ENCODE measurements at regions of chr9 and their contacts with region 1.

Region 1: GRCh38 chr9:93962561-93963440 is 7.6 kb upstream of the BARX1 start:
- DNase-seq: peak; percentile 78 to 82
- ATAC-seq: peak; percentile 65 to 89; a peak in 5 of 6 replicates
- H3K4me3 ChIP-seq: no peak overlapping the region
- H3K27ac ChIP-seq: 0 out of 6 replicates have a peak overlapping the region, but pooled peaks of 1 of the 2 experiments have one; percentile 37
- H3K4me1 ChIP-seq: peaks cover 3% of the 10 kb centered on the region; the same call in 1 of the 3 replicates
- CTCF ChIP-seq: peak; percentile 86
- EP300 ChIP-seq: no peak
- POLR2A ChIP-seq: no peak
- RAD21 ChIP-seq: peak; percentile 82 to 87

Region 2: GRCh38 chr9:93827545-93828330 is 135.1 kb before region 1 on chr9:
- CTCF ChIA-PET with region 1: interaction called, 21 read pairs
- POLR2A ChIA-PET with region 1: no interaction called
- DNase-seq: peak; percentile 62 to 89
- ATAC-seq: peak; percentile 91 to 98
- H3K4me3 ChIP-seq: peak overlapping the region; percentile 26; the same call in 1 of the 3 replicates
- H3K27ac ChIP-seq: peak overlapping the region in 1 of 2 experiments; percentile 38; a peak in 2 of 6 replicates
- H3K4me1 ChIP-seq: 0 out of 3 replicates have a peak, but pooled peaks cover 3% of the 10 kb centered on the region
- CTCF ChIP-seq: peak; percentile 56
- EP300 ChIP-seq: no peak
- POLR2A ChIP-seq: no peak
- RAD21 ChIP-seq: peak in 1 of 2 experiments; percentile 46; a peak in 4 of 5 replicates

Region 3: GRCh38 chr9:93945400-93946337 is 17.1 kb before region 1 on chr9:
- CTCF ChIA-PET with region 1: interaction called, 56 read pairs
- POLR2A ChIA-PET with region 1: no interaction called
- DNase-seq: no peak
- ATAC-seq: peak; percentile 11 to 53; a peak in 3 of 6 replicates
- H3K4me3 ChIP-seq: peak overlapping the region; percentile 54
- H3K27ac ChIP-seq: peak overlapping the region in 1 of 2 experiments; percentile 67; a peak in 4 of 6 replicates
- H3K4me1 ChIP-seq: no peaks in the 10 kb centered on the region
- CTCF ChIP-seq: no peak
- EP300 ChIP-seq: no peak
- POLR2A ChIP-seq: no peak
- RAD21 ChIP-seq: no peak

Region 4: GRCh38 chr9:93950619-93951601 is 11.9 kb before region 1 on chr9:
- CTCF ChIA-PET with region 1: interaction called, 56 read pairs
- POLR2A ChIA-PET with region 1: no interaction called
- DNase-seq: no peak
- ATAC-seq: no peak
- H3K4me3 ChIP-seq: no peak overlapping the region
- H3K27ac ChIP-seq: no peak overlapping the region
- H3K4me1 ChIP-seq: no peaks in the 10 kb centered on the region; the same call in 2 of the 3 replicates
- CTCF ChIP-seq: no peak
- EP300 ChIP-seq: no peak
- POLR2A ChIP-seq: no peak
- RAD21 ChIP-seq: no peak

Region 5: GRCh38 chr9:93978551-93978950 is 15.8 kb after region 1 on chr9:
- CTCF ChIA-PET with region 1: interaction called, 30 read pairs
- POLR2A ChIA-PET with region 1: no interaction called
- DNase-seq: no peak
- ATAC-seq: no peak
- H3K4me3 ChIP-seq: no peak overlapping the region
- H3K27ac ChIP-seq: no peak overlapping the region; a peak in 2 of 6 replicates
- H3K4me1 ChIP-seq: 0 out of 3 replicates have a peak, but pooled peaks cover 5% of the 10 kb centered on the region
- CTCF ChIP-seq: no peak
- EP300 ChIP-seq: no peak
- POLR2A ChIP-seq: no peak
- RAD21 ChIP-seq: no peak

Measured in A549 (cell line).